ENCODE measurements at regions of chr2 and their contacts with region 1.

Region 1: GRCh38 chr2:27281855-27282559 is at the start of gene TRIM54:
- DNase-seq: peak; percentile 89 to 96
- ATAC-seq: peak; percentile 75 to 77
- H3K4me3 ChIP-seq: peak within 1 kb of the TSS; percentile 59 to 84 (median 75)
- H3K27ac ChIP-seq: peak within 1 kb of the TSS; percentile 88 to 99 (median 98)
- H3K4me1 ChIP-seq: peaks cover 29 to 30% of the 10 kb centered on the region in 2 donors
- H3K27me3 ChIP-seq: no peaks in the 10 kb centered on the region
- CTCF ChIP-seq: peak in 1 of 5 experiments; percentile 23
- POLR2A ChIP-seq: peak; percentile 89 to 94
- total RNA-seq, gene TRIM54: 219 to 554 (median 427) TPM

Region 2: GRCh38 chr2:26970244-26970920 is 311.6 kb before region 1 on chr2 and contains the start of gene MAPRE3:
- in situ Hi-C with region 1: loop called in 3 of 4 experiments (anchors 10 to 25 kb)
- intact Hi-C with region 1: loop called (anchors 5 kb)
- DNase-seq: peak; percentile 60 to 78
- ATAC-seq: peak; percentile 73 to 75
- H3K4me3 ChIP-seq: peak within 1 kb of the TSS; percentile 67 to 87 (median 79)
- H3K27ac ChIP-seq: peak within 1 kb of the TSS; percentile 94 to 97 (median 96)
- H3K4me1 ChIP-seq: peaks cover 37 to 41% of the 10 kb centered on the region in 2 donors
- H3K27me3 ChIP-seq: no peaks in the 10 kb centered on the region
- CTCF ChIP-seq: no peak
- POLR2A ChIP-seq: peak; percentile 92
- total RNA-seq, gene MAPRE3: 41.9 to 66.5 (median 53.9) TPM

Region 3: DNA sequence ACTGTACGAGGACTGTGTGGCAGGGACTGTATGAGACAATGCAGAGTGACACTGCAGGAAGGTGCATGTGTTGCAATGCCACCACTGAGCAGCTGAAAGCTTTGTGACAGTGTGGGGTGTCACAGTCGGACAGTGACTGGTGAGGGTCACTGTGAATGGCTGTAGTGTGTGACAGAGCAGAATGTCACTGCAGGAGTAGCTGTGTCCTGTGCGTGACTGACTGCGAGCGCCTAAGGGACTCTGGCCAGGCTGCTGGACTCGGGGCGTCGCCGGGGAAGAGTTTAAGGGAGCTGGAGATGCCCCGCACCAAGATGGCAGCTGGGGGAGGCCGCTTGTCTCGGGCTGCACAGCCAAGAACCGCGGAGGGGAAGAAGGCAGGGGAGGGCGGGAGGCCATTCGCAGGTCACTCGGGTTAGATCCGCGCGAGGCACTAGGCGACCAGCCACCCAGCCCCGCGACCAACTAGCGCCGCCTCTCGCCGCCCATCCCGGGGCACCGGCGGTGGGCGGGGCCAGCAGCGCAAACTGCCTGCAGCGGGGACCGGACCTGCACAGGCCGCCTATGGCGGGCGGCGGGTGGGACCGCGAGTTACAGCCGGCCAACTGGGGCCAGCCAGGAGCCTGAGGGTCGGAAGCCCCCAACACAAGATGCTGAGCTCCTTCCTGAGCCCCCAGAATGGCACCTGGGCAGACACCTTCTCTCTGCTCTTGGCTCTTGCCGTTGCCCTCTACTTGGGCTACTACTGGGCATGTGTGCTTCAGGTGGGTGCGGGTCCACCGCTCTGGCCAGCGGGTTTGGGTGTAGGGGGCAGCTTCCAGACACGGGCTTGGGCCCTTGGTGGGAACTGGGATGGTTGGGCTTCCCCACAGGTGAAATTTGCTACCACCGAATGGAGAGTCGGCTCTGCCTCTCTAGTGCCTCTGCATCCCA is 158.4 kb before region 1 on chr2 and contains the start of gene ABHD1:
- in situ Hi-C with region 1: no loop called
- intact Hi-C with region 1: loop called (anchors 5 kb)
- DNase-seq: peak; percentile 57 to 76
- ATAC-seq: peak; percentile 57 to 83
- H3K4me3 ChIP-seq: peak within 1 kb of the TSS; percentile 65 to 80 (median 70)
- H3K27ac ChIP-seq: peak within 1 kb of the TSS; percentile 83 to 93 (median 86)
- H3K4me1 ChIP-seq: peaks cover 15 to 27% of the 10 kb centered on the region in 2 donors
- H3K27me3 ChIP-seq: no peaks in the 10 kb centered on the region
- CTCF ChIP-seq: no peak
- POLR2A ChIP-seq: peak; percentile 56 to 71
- total RNA-seq, gene ABHD1: 0.61 to 2.3 (median 1.2) TPM

Region 4: GRCh38 chr2:27249891-27250651 is 31.9 kb before region 1 on chr2:
- in situ Hi-C with region 1: no loop called
- intact Hi-C with region 1: loop called (anchors 1 kb)
- DNase-seq: peak in 1 of 2 donors; percentile 54
- ATAC-seq: peak; percentile 30 to 82
- H3K4me3 ChIP-seq: no peak overlapping the region
- H3K27ac ChIP-seq: no peak overlapping the region
- H3K4me1 ChIP-seq: peaks cover 7% of the 10 kb centered on the region in 2 donors
- H3K27me3 ChIP-seq: no peaks in the 10 kb centered on the region
- CTCF ChIP-seq: peak; percentile 67 to 84 (median 79)
- POLR2A ChIP-seq: no peak

Region 5: GRCh38 chr2:27303093-27304025 is 21.4 kb after region 1 on chr2:
- in situ Hi-C with region 1: no loop called
- intact Hi-C with region 1: loop called (anchors 1 kb)
- DNase-seq: peak in 1 of 2 donors; percentile 67
- ATAC-seq: peak; percentile 64 to 72
- H3K4me3 ChIP-seq: peak overlapping the region in 3 of 4 donors; percentile 5 to 20 (median 12)
- H3K27ac ChIP-seq: peak overlapping the region; percentile 58 to 99 (median 92)
- H3K4me1 ChIP-seq: peaks cover 14 to 38% of the 10 kb centered on the region in 2 donors
- H3K27me3 ChIP-seq: peaks cover 0 to 4% (median 2%) of the 10 kb centered on the region in 3 donors
- CTCF ChIP-seq: peak; percentile 82 to 89 (median 86)
- POLR2A ChIP-seq: no peak